Activated CD4-positive, alpha-beta memory T cell treated with anti-CD3 and anti-CD28 coated beads for 36 hours (primary cell): ENCODE measurements at regions of chr13 and their contacts with region 1.

Region 1: DNA sequence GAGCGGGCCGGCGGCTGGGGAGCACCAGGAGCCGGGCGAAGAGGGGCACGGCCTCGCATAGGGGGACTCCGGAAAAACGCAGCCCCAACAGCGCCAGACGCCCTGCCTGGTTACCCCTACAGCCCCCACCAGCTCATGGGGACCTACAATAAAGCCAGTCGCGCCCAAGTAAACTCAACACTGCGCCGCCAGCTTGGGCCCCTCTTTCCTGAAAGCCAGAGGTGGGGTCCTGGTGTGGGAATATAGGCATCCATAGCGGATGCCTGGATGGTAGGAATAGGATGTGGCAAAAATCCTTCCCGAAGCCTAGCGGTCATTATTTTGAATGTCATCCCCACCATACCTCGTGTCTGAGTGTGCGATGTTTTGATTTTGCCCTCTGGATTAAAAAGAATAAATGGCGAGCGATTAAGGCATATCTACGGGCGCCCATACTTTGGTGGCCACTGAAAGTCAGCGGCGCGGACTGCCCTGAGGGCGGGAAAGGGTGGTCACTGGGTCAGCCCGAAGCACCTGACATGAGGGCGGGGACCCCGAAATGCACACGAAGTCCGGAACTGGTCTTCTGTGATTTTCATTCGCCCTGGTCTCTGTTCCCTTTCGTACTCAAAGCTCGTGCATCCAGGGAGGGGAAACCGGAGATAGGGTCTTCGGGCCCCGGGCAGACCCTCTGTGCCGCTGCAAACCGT is at the starts of genes NHLRC3 and PROSER1:
- DNase-seq: peak; percentile 87
- H3K4me3 Mint-ChIP-seq: peak within 1 kb of the TSS; percentile 89
- H3K27ac Mint-ChIP-seq: peak within 1 kb of the TSS; percentile 95
- H3K4me1 Mint-ChIP-seq: peaks cover 36% of the 10 kb centered on the region
- H3K27me3 Mint-ChIP-seq: no peaks in the 10 kb centered on the region
- total RNA-seq, gene NHLRC3: 15.2 to 16.8 TPM
- total RNA-seq, gene PROSER1: 59.9 to 70.5 TPM

Region 2: DNA sequence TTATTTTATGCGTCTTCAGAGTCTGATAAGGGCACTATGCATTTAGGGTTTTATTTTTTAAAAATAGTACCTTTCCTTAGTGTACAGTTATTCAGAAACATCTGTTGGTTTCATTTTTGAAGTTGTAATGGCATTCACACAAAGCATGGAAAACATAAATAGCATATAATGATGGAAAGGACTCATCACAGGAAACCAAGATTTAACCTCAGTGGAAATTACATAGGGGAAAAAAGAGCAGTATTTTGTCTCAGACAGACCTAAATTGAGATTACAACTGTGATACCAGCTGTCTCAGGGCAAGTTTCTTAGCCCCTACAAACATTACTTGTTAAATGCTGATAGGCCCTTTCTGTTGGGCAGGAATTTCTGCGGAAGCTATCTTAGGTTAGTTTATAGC is 57.5 kb after region 1 on chr13:
- CTCF ChIA-PET with region 1: no interaction called
- POLR2A ChIA-PET with region 1: interaction called, 10 read pairs
- intact Hi-C with region 1: loop called (anchors 2 kb)
- DNase-seq: no peak
- H3K4me3 Mint-ChIP-seq: peak overlapping the region; percentile 54
- H3K27ac Mint-ChIP-seq: peak overlapping the region; percentile 87
- H3K4me1 Mint-ChIP-seq: peaks cover 35% of the 10 kb centered on the region
- H3K27me3 Mint-ChIP-seq: no peaks in the 10 kb centered on the region

Region 3: DNA sequence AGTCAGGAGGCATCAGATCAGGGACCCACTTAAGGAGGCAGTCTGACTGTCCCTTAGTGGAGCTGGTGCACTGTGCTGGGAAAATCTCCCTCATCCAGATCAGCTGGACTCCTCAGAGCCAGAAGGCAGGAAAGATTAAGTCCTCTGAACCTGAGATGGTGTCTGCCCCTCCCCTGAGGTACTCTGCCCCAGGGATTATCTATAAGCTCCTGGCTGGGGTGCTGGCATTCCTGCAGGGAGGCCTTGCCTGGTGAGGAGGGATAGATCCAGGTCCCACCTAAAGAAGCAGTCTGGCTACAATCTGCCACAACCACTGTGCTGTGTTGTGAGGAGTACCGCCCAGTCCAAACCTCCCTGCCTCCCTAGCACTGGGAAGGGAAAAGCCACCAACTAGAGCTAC is 81.4 kb after region 1 on chr13:
- CTCF ChIA-PET with region 1: no interaction called
- POLR2A ChIA-PET with region 1: no interaction called
- intact Hi-C with region 1: no loop called
- DNase-seq: no peak
- H3K4me3 Mint-ChIP-seq: no peak overlapping the region
- H3K27ac Mint-ChIP-seq: no peak overlapping the region
- H3K4me1 Mint-ChIP-seq: peaks cover 8% of the 10 kb centered on the region
- H3K27me3 Mint-ChIP-seq: peaks cover 14% of the 10 kb centered on the region

Region 4: DNA sequence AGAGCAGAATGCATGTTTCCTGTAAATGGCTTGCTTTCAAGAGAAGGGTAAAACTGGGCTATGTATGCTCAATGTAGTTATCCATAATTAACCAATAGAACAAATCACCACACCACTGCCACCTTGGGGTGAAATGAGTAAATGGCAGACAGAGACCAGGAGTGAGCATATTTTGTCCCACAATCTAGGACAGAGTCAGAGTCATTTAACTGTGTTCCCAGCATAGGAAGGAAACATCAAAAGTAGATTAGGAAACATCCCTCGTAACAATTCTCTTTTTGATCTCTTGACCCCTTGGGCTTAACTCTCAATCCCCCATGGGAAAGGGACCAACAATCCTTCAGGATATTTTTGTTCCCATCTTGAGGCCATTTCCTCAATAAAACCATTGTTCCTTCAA is 225.0 kb after region 1 on chr13:
- CTCF ChIA-PET with region 1: interaction called, 3 read pairs
- POLR2A ChIA-PET with region 1: no interaction called
- intact Hi-C with region 1: loop called (anchors 5 kb)
- DNase-seq: peak; percentile 63
- H3K4me3 Mint-ChIP-seq: no peak overlapping the region
- H3K27ac Mint-ChIP-seq: no peak overlapping the region
- H3K4me1 Mint-ChIP-seq: peaks cover 19% of the 10 kb centered on the region
- H3K27me3 Mint-ChIP-seq: no peaks in the 10 kb centered on the region

Region 5: GRCh38 chr13:39602614-39603366 is 564.8 kb after region 1 on chr13 and contains the start of gene LHFPL6:
- CTCF ChIA-PET with region 1: no interaction called
- POLR2A ChIA-PET with region 1: no interaction called
- intact Hi-C with region 1: loop called (anchors 2 kb)
- DNase-seq: peak; percentile 83
- H3K4me3 Mint-ChIP-seq: peak within 1 kb of the TSS; percentile 76
- H3K27ac Mint-ChIP-seq: no peak within 1 kb of the TSS
- H3K4me1 Mint-ChIP-seq: peaks cover 14% of the 10 kb centered on the region
- H3K27me3 Mint-ChIP-seq: peaks cover 35% of the 10 kb centered on the region
- total RNA-seq, gene LHFPL6: 2.7 to 3.0 TPM